ENCODE measurements at regions of chrX and their contacts with region 1.

Region 1: GRCh38 chrX:23694606-23695005 is 27.3 kb downstream of the PRDX4 start:
- DNase-seq: peak; percentile 45 to 78 (median 54)
- ATAC-seq: peak; percentile 56
- H3K4me3 ChIP-seq: no peak overlapping the region
- H3K27ac ChIP-seq: no peak overlapping the region
- H3K4me1 ChIP-seq: no peaks in the 10 kb centered on the region
- H3K27me3 ChIP-seq: no peaks in the 10 kb centered on the region
- CTCF ChIP-seq: peak in 6 of 7 experiments; percentile 27 to 51 (median 40)
- POLR2A ChIP-seq: no peak

Region 2: DNA sequence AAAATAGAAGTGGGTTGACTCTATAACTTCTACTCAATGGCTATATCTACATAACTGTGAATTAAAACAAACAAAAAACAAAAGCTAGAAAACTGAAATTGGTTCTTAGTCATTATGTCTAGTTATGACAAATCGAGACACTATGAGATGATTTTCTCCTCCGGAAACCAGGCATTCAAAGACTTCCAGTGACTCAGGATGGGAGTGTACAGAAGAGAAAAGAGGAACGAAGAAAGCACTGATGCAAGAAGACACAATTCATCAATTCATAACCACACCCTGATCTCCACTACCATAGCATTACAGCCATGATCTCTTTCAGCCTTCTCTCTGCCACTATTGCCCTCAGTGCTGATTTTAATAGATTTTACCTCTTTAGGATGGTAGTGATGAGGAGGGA is 1168.3 kb before region 1 on chrX:
- intact Hi-C with region 1: no loop called
- DNase-seq: no peak
- ATAC-seq: no peak
- H3K4me3 ChIP-seq: no peak overlapping the region
- H3K27ac ChIP-seq: no peak overlapping the region
- H3K4me1 ChIP-seq: no peaks in the 10 kb centered on the region
- H3K27me3 ChIP-seq: no peaks in the 10 kb centered on the region
- CTCF ChIP-seq: no peak
- POLR2A ChIP-seq: no peak

Region 3: GRCh38 chrX:23554304-23554703 is 140.3 kb before region 1 on chrX:
- intact Hi-C with region 1: no loop called
- DNase-seq: peak in 1 of 4 donors; percentile 9
- ATAC-seq: peak; percentile 53
- H3K4me3 ChIP-seq: no peak overlapping the region
- H3K27ac ChIP-seq: no peak overlapping the region
- H3K4me1 ChIP-seq: no peaks in the 10 kb centered on the region
- H3K27me3 ChIP-seq: no peaks in the 10 kb centered on the region
- CTCF ChIP-seq: peak; percentile 31 to 69 (median 52)
- POLR2A ChIP-seq: no peak

Region 4: DNA sequence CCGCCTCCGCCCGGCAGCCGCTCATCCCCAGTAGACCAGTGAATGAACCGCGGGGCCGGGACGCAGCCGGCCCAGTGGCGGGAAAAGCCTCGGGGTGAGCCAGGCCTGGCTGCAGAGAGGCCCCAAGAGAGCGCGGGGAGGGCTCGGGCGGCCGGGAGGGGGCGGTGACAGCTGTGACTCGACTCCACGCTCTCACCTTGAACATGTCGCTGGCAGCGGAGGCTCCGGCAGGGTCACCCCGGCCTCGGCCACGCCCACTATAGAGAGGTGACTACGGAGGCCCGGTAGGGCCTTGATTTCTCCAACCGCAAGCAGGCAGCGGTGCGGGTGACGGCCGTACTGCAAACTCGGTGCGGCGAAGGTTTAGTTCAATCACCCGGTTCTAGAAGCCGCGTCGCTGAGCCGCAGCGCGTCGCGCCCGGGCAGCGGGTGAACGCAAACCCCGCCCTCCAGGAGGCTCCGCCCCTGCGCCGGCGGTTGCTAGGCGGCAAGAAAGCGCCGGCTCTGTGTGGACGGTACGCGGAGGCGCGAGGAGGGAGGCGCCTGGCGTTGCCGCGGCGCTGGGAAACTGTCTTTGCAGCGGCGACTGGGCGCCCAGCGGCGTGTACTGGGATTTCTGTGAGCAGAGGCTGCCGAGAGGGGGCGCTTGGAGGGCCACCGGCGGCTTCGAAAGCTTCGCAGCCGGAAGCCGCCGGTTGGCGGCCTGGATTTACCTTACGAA is 213.1 kb after region 1 on chrX and contains the starts of genes APOO and CXorf58:
- intact Hi-C with region 1: loop called (anchors 10 kb)
- DNase-seq: peak; percentile 92 to 93 (median 93)
- ATAC-seq: peak; percentile 97
- H3K4me3 ChIP-seq: peak within 1 kb of the TSS; percentile 7 to 24
- H3K27ac ChIP-seq: peak within 1 kb of the TSS; percentile 80 to 93 (median 88)
- H3K4me1 ChIP-seq: peaks cover 17% of the 10 kb centered on the region
- H3K27me3 ChIP-seq: no peaks in the 10 kb centered on the region
- CTCF ChIP-seq: peak; percentile 37 to 98 (median 97)
- POLR2A ChIP-seq: peak; percentile 42 to 72 (median 68)
- total RNA-seq, gene APOO: 7.5 to 9.9 TPM
- total RNA-seq, gene CXorf58: 0.26 TPM in 1 of 2 donors, not detected in the other